CD8-positive, alpha-beta T cell (primary cell): ENCODE measurements at regions of chr10 and their contacts with region 1.

Region 1: DNA sequence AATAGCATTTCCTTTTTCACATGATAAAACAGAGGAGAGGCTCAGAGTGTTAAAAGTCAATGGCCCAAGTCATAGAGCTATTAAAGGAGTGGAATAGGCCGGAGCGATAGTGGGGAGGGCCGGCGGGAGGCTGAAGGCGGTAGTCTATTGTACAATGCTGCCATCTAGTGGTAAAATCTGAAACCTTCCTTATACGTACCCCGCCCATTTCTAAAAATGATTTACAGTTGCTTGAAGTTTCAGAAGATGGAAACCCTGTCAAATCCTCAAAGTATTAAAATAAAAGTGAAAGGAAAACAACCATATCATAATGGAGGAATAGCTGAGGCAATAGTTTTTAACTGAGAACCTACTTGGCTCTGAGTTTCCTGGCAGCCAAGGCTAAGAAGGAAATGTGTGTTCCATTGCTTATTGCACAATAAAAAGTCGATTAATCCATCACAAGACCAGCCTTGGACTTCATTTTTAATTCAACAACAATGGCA is 209.1 kb downstream of the CCSER2 start:
- DNase-seq: peak in 5 of 9 experiments; percentile 22 to 76 (median 60)
- ATAC-seq: peak; percentile 69
- H3K4me3 ChIP-seq: no peak overlapping the region
- H3K4me3 Mint-ChIP-seq: no peak overlapping the region
- H3K27ac ChIP-seq: no peak overlapping the region
- H3K27ac Mint-ChIP-seq: no peak overlapping the region
- H3K4me1 ChIP-seq: peaks cover 4% of the 10 kb centered on the region
- H3K4me1 Mint-ChIP-seq: peaks cover 8% of the 10 kb centered on the region
- H3K27me3 ChIP-seq: peaks cover 5 to 9% of the 10 kb centered on the region in 2 experiments
- H3K27me3 Mint-ChIP-seq: peaks cover 24% of the 10 kb centered on the region
- CTCF ChIP-seq: peak; percentile 94

Region 2: GRCh38 chr10:84114088-84114667 is 423.3 kb before region 1 on chr10:
- CTCF ChIA-PET with region 1: no interaction called
- POLR2A ChIA-PET with region 1: no interaction called
- intact Hi-C with region 1: no loop called
- DNase-seq: no peak
- ATAC-seq: no peak
- H3K4me3 ChIP-seq: no peak overlapping the region
- H3K4me3 Mint-ChIP-seq: no peak overlapping the region
- H3K27ac ChIP-seq: no peak overlapping the region
- H3K27ac Mint-ChIP-seq: no peak overlapping the region
- H3K4me1 ChIP-seq: no peaks in the 10 kb centered on the region
- H3K4me1 Mint-ChIP-seq: no peaks in the 10 kb centered on the region
- H3K27me3 ChIP-seq: no peaks in the 10 kb centered on the region
- H3K27me3 Mint-ChIP-seq: peaks cover 24% of the 10 kb centered on the region
- CTCF ChIP-seq: no peak

Region 3: DNA sequence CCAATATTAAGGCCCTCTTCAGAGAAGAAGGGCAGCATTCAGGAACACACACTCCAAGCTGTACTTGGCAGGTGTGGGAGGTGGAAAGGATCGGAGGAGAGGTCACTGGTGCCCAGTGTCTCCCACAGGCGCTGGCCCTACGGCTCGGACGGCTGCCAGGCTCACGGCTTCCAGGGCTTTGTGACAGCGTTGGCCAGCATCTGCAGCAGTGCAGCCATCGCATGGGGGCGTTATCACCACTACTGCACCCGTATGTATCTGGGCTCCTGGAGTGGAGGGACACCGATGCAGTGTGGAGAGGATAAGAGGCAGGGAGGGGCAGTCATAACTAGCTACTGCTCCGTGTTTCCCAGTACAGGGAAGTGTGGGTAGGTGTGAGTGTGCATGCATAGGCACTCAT is 288.7 kb before region 1 on chr10:
- CTCF ChIA-PET with region 1: interaction called, 10 read pairs
- POLR2A ChIA-PET with region 1: no interaction called
- intact Hi-C with region 1: no loop called
- DNase-seq: no peak
- ATAC-seq: no peak
- H3K4me3 ChIP-seq: no peak overlapping the region
- H3K4me3 Mint-ChIP-seq: no peak overlapping the region
- H3K27ac ChIP-seq: no peak overlapping the region
- H3K27ac Mint-ChIP-seq: no peak overlapping the region
- H3K4me1 ChIP-seq: no peaks in the 10 kb centered on the region
- H3K4me1 Mint-ChIP-seq: no peaks in the 10 kb centered on the region
- H3K27me3 ChIP-seq: no peaks in the 10 kb centered on the region
- H3K27me3 Mint-ChIP-seq: no peaks in the 10 kb centered on the region
- CTCF ChIP-seq: no peak

Region 4: DNA sequence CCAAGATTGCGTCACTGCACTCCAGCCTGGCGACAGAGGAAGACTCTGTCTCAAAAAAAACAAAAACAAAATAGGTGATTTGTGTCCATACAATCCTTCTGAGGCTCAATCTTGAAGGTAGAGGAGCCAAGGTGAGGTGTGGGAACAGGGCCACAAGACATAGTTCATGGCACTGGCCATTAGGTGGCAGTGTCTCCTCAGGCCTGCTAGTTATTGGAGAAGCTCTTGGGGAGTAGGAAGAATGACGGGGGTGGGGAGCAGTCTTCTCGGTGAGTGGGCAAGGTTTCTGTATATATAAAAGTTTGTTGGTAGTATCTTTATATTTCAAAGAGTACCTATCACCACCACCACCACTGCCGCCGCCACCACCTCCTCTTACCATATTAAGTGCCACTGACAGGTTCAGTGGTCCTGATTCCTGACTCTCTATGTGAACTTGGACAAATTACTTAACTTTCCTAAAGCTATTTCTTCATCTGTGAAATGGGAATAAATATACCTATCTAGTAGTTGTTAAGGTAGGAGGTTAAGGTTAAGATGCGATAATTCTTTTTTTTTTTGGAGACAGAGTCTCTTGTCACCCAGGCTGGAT is 185.1 kb before region 1 on chr10:
- CTCF ChIA-PET with region 1: interaction called, 47 read pairs
- POLR2A ChIA-PET with region 1: no interaction called
- intact Hi-C with region 1: loop called (anchors 1 kb)
- DNase-seq: peak; percentile 46 to 86 (median 72)
- ATAC-seq: peak; percentile 82
- H3K4me3 ChIP-seq: no peak overlapping the region
- H3K4me3 Mint-ChIP-seq: no peak overlapping the region
- H3K27ac ChIP-seq: no peak overlapping the region
- H3K27ac Mint-ChIP-seq: peak overlapping the region; percentile 71
- H3K4me1 ChIP-seq: peaks cover 50% of the 10 kb centered on the region
- H3K4me1 Mint-ChIP-seq: peaks cover 73% of the 10 kb centered on the region
- H3K27me3 ChIP-seq: no peaks in the 10 kb centered on the region
- H3K27me3 Mint-ChIP-seq: no peaks in the 10 kb centered on the region
- CTCF ChIP-seq: peak; percentile 69

Region 5: GRCh38 chr10:84375011-84375410 is 162.5 kb before region 1 on chr10:
- CTCF ChIA-PET with region 1: interaction called, 65 read pairs
- POLR2A ChIA-PET with region 1: no interaction called
- intact Hi-C with region 1: loop called (anchors 1 kb)
- DNase-seq: peak in 5 of 9 experiments; percentile 24 to 79 (median 51)
- ATAC-seq: peak; percentile 74
- H3K4me3 ChIP-seq: no peak overlapping the region
- H3K4me3 Mint-ChIP-seq: no peak overlapping the region
- H3K27ac ChIP-seq: no peak overlapping the region
- H3K27ac Mint-ChIP-seq: peak overlapping the region; percentile 70
- H3K4me1 ChIP-seq: peaks cover 4% of the 10 kb centered on the region
- H3K4me1 Mint-ChIP-seq: peaks cover 60% of the 10 kb centered on the region
- H3K27me3 ChIP-seq: no peaks in the 10 kb centered on the region
- H3K27me3 Mint-ChIP-seq: no peaks in the 10 kb centered on the region
- CTCF ChIP-seq: peak; percentile 68

Region 6: DNA sequence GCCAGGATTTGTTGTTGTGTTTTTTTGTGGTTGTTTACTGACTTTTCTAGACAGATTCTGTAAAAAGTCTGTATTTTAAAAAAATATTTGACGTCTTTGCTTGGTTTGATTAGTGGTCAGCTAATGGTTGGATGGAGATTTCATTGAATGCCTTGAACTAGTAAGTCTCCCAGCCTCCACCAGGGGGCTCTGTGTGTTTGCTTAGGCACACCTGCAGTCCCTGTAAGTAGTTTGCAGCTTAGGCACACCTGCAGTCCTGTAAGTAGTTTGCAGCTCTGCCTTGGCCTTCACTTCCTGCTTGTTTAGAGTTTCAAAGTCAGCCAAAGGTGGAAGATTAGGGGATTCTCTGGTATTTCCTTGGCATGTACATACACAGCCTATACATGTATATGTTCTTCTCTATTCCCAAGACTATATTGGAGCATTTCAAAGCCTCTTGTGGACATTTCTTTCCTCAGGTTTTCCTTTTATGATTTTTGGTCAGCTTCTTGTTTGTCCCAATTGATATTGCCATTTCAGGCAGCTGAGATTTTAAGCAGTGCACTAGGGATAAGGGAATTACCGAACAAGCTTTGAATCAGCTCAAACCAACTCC is 107.5 kb before region 1 on chr10:
- CTCF ChIA-PET with region 1: interaction called, 9 read pairs
- POLR2A ChIA-PET with region 1: interaction called, 3 read pairs
- intact Hi-C with region 1: loop called in 1 of 2 experiments (anchors 5 kb)
- DNase-seq: peak; percentile 32 to 75 (median 67)
- ATAC-seq: peak; percentile 87
- H3K4me3 ChIP-seq: no peak overlapping the region
- H3K4me3 Mint-ChIP-seq: no peak overlapping the region
- H3K27ac ChIP-seq: no peak overlapping the region
- H3K27ac Mint-ChIP-seq: peak overlapping the region; percentile 20
- H3K4me1 ChIP-seq: peaks cover 15% of the 10 kb centered on the region
- H3K4me1 Mint-ChIP-seq: peaks cover 64% of the 10 kb centered on the region
- H3K27me3 ChIP-seq: no peaks in the 10 kb centered on the region
- H3K27me3 Mint-ChIP-seq: no peaks in the 10 kb centered on the region
- CTCF ChIP-seq: peak; percentile 78

Region 7: GRCh38 chr10:84548869-84549268 is 11.4 kb after region 1 on chr10:
- CTCF ChIA-PET with region 1: interaction called, 46 read pairs
- POLR2A ChIA-PET with region 1: no interaction called
- intact Hi-C with region 1: no loop called
- DNase-seq: no peak
- ATAC-seq: no peak
- H3K4me3 ChIP-seq: no peak overlapping the region
- H3K4me3 Mint-ChIP-seq: no peak overlapping the region
- H3K27ac ChIP-seq: no peak overlapping the region
- H3K27ac Mint-ChIP-seq: no peak overlapping the region
- H3K4me1 ChIP-seq: no peaks in the 10 kb centered on the region
- H3K4me1 Mint-ChIP-seq: no peaks in the 10 kb centered on the region
- H3K27me3 ChIP-seq: no peaks in the 10 kb centered on the region
- H3K27me3 Mint-ChIP-seq: peaks cover 21% of the 10 kb centered on the region
- CTCF ChIP-seq: no peak

Region 8: DNA sequence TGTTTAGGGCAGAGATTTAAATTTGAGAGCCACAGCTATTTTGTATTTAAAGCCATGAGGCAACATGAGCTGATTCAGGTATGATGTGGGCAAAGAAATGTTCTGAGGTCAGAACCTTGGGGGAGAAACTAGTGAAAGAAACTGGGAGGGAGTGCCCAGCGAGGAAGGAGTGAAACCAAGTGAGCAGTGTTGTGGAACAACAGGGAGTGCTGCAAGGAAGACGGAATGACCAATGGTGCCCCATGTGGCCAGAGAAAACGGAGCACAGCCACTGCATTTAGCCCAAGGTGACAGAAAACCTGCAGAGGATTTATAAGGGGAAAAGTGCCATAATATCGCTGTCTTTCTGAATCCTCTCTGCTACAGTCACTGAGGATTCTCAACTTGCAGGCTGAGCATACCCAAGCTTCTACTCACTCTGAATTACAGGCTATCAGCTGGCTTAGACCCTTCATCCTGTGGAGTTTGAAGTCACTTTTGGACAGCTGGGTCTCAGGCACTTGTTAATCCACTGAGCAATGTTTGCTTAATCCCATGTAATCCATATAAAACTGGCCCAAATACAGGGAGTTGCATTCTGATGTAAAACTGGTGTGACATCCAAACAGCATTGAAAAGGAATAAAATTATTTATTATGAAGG is 568.2 kb after region 1 on chr10:
- CTCF ChIA-PET with region 1: no interaction called
- POLR2A ChIA-PET with region 1: no interaction called
- intact Hi-C with region 1: no loop called
- DNase-seq: no peak
- ATAC-seq: no peak
- H3K4me3 ChIP-seq: no peak overlapping the region
- H3K4me3 Mint-ChIP-seq: no peak overlapping the region
- H3K27ac ChIP-seq: no peak overlapping the region
- H3K27ac Mint-ChIP-seq: no peak overlapping the region
- H3K4me1 ChIP-seq: no peaks in the 10 kb centered on the region
- H3K4me1 Mint-ChIP-seq: no peaks in the 10 kb centered on the region
- H3K27me3 ChIP-seq: no peaks in the 10 kb centered on the region
- H3K27me3 Mint-ChIP-seq: no peaks in the 10 kb centered on the region
- CTCF ChIP-seq: no peak